Aorta (tissue), 5 donors: ENCODE measurements at regions of chr2 and their contacts with region 1.

Region 1: DNA sequence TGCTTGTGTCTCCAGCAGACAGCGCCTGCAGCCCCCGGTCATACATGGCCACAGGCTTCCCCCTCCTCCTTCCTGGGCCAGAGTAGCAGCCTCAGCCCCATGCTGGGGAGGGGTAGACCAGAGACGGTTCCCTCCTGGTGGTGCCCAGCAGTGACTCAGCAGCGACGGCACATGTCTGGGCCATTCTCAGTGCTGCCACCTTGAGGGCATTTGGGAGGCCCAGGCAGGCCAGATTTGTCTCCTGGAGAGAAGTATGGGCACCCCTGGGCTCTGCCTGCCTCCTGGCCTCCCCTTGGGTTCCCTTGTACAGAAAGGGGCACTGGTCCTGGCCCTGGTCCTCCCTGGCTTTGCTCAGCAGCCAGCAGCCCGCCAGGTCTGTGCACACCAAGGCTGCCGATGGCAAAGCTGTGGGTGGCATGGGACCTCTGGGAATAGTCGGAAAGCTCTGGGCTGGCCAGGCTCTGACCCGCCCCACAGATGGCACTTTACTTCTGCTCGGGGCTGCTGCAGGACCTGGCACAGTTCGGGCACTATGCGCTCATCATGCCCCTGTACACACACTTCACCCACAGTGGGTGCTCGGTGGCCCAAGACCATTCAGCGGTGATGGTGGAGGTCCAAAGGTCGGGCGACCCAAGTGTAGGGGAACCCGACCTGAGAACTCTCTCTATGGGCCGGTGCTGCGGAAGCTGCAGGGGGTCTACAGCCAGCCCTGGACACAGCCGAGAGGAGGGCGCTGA is 11.4 kb upstream of the ALPI start:
- DNase-seq: peak in 1 of 2 donors; percentile 71
- ATAC-seq: no peak
- H3K4me3 ChIP-seq: no peak overlapping the region
- H3K27ac ChIP-seq: no peak overlapping the region
- H3K4me1 ChIP-seq: no peaks in the 10 kb centered on the region
- H3K27me3 ChIP-seq: no peaks in the 10 kb centered on the region

Region 2: DNA sequence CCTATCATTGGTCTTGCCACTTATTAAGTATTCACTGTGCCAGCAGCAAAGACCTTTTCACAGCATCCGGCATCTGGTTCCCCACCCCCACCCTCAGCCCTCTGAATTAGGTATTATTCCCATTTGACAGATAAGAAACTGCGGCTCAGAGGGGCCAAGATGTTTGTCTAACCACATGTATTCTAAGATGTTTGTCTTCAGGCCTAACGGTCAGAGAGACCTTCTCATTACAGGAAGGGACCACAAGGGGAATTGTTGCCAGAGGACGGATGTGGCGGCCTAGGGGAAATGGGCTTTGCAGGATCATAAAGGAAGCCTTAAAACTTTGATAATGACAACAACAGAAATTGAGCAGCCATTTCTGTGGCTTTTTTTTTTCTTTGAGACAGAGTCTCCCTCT is 534.9 kb before region 1 on chr2:
- intact Hi-C with region 1: loop called in 1 of 2 experiments (anchors 2 kb)
- DNase-seq: no peak
- ATAC-seq: no peak
- H3K4me3 ChIP-seq: no peak overlapping the region
- H3K27ac ChIP-seq: no peak overlapping the region
- H3K4me1 ChIP-seq: no peaks in the 10 kb centered on the region
- H3K27me3 ChIP-seq: no peaks in the 10 kb centered on the region

Region 3: GRCh38 chr2:232333361-232334270 is 111.0 kb before region 1 on chr2:
- intact Hi-C with region 1: no loop called
- DNase-seq: peak; percentile 42 to 67
- ATAC-seq: no peak
- H3K4me3 ChIP-seq: no peak overlapping the region
- H3K27ac ChIP-seq: no peak overlapping the region
- H3K4me1 ChIP-seq: no peaks in the 10 kb centered on the region
- H3K27me3 ChIP-seq: no peaks in the 10 kb centered on the region

Region 4: DNA sequence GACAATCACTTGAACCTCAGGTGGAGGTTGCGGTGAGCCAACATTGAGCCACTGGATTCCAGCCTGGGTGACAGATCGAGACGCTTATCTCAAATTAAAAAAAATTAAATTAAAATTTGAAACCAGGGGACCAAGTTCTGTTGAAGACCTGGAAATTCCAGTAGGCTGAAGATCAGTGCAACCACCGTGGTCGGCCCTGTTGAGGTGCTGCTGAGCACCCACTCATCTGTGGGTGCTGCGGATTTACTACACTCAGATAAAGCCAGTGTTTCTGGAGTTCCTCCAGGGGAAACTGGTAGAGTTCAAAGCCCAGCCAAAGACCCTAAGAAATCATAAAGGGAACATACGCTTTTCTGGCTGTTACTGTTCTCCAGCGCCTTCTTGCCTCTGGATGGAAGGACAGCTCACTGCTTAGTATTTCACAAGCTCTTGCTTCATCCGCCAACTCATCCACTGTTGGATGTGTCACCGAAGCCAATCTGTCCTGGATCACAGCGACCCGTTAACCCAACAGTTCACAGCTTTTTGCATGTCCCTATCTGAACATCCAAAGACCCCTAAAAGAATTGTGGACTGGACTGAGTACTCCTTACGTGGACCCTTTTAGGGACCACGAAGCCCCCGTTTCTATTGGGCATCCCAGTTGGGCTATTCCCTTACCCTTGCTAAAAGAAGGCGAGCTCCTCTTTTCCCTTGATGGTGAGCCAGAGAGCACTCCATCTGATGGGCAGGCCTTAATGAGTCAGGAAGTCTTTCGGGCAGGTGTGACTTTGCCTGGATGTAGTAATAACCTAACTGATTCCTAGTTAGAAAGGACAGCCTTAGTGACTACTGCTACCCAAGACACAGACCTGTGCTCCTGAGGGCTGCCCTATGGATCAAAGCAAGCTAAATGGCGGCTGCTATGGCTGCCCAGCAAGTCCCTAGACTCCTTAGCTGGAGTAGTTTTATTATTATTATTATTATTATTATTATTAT is 72.1 kb before region 1 on chr2:
- intact Hi-C with region 1: no loop called
- DNase-seq: peak; percentile 3 to 37
- ATAC-seq: no peak
- H3K4me3 ChIP-seq: no peak overlapping the region
- H3K27ac ChIP-seq: no peak overlapping the region
- H3K4me1 ChIP-seq: no peaks in the 10 kb centered on the region
- H3K27me3 ChIP-seq: no peaks in the 10 kb centered on the region

Region 5: DNA sequence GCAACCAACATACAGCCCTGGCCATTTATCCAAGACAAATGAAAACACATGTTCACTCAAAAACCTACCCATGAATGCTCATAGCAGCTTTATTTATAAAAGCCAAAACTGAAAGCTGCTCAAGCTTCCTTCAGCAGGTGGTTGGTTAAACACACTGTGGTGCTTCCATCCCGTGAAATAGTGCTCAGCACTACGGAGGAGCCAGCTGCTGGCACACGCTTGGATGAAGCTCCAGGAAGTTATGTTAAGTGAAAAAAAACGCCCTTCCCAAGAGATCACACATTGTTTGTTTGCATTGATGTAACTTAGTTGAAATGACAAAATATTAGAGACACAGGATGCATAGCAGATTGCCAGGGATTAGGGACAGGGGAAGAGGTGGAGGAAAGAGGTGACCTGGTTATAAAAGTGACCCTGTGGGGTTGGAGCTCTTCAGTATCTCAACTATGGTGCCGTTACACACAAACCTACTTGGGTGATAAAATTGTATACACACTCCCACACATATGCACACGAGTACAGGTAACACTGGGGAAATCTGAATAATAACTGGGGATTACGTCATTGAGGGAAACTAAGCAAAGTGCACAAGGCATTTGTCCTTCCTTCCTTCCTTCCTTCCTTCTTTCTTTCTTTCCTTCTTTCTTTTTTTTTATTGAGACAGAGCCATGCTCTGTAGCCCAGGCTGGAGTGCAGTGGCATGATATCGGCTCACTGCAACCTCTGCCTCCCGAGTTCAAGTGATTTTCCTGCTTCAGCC is 44.1 kb before region 1 on chr2:
- intact Hi-C with region 1: no loop called
- DNase-seq: no peak
- ATAC-seq: no peak
- H3K4me3 ChIP-seq: no peak overlapping the region
- H3K27ac ChIP-seq: no peak overlapping the region
- H3K4me1 ChIP-seq: no peaks in the 10 kb centered on the region
- H3K27me3 ChIP-seq: no peaks in the 10 kb centered on the region